Left ventricle myocardium superior (tissue), 1 donor: ENCODE measurements at regions of chr18 and their contacts with region 1.

Region 1: GRCh38 chr18:44679056-44679905 is 1.4 kb upstream of the SETBP1 start:
- DNase-seq: peak; percentile 92
- ATAC-seq: peak; percentile 97

Region 2: DNA sequence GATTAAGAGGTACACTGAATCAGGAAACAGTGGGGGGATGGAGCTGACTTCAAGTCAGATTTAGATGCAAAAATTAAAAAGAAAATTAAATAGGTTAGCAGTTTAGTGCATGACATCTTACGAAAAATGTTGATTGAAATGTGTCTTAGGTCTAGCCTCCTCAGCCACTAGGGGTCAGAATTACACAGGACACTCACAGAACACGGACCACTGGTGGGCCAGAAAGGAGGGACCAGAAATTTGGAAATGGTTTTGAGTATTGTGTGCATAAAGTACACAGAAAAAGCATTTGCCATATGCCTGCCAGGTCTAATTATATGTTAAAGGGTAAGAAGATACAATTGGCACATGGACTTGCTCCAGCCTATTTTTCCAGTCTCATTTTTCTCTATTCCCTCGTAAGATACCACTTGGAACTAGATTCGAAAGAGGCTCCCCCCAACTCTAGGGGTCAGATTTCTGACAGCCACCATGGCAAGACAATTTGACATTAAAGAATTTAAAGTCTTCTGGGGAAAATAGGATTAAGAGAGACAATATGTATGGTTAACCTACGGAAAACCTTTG is 548.8 kb before region 1 on chr18:
- intact Hi-C with region 1: loop called (anchors 10 kb)
- DNase-seq: no peak
- ATAC-seq: no peak

Region 3: DNA sequence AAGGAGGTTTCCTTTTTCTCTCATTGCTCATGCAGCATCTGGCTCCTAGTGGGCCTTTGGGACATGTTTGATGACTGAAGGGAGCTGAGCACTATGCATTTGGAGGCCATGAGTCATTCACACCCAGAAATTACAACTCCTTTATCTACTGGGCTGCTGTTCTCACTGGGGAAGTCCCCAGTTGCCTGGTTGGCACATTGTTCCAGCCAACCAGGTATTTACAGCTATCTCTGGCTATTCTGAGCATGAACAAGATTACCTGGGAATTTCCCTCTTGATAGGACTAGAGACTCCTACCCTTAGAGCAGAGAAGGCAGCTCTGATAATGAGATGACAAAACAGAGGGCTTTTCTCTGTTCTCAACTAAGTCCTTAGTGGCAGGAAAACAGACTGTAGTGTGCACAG is 207.9 kb after region 1 on chr18:
- intact Hi-C with region 1: loop called (anchors 10 kb)
- DNase-seq: no peak
- ATAC-seq: peak; percentile 95

Region 4: DNA sequence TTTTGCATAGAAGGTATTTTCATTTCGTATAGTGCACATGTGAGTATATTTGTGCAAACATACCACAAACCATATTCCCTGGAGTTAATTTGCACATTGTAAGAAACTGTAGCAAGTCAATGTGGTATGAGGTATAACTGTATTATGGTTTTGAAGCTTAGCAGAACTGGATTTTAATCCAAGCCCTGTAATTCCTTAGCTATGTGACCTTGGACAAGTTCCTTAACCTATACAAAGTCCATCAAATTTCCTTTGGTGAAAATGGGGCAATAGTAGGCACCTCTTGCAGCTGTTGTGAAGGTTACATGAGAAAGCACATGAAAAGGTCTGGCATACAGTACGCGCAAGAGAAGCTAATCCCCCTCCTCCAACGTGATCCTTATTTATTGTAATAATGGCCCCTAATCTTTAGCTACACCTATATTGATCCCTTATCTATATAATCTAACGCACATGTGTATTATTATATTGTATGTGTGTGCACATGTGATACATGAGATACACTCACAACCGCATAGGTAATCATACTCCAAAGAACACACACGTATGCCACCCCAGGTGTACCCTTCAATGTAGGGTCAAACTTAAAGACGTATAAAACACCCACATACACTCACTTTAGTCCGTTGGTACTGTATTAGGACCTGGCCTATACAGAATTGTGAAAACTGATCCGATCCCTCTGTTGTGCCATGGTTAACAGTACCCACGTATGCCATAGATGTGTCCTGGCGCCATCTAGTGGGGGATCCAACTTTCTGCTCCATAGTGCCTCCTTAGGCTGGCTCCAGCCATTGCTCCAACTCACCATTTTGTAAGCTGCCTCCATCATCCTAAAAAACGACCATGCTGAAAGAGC is 533.1 kb after region 1 on chr18:
- intact Hi-C with region 1: loop called (anchors 10 kb)
- DNase-seq: peak; percentile 81
- ATAC-seq: peak; percentile 98